Thyroid gland (tissue), 4 donors: ENCODE measurements at regions of chr6 and their contacts with region 1.

Region 1: GRCh38 chr6:90296346-90297114 is at the start of gene BACH2:
- DNase-seq: peak; percentile 94 to 95
- H3K4me3 ChIP-seq: peak within 1 kb of the TSS; percentile 10 to 87 (median 76)
- H3K27ac ChIP-seq: peak within 1 kb of the TSS; percentile 36 to 83 (median 71)
- H3K4me1 ChIP-seq: peaks cover 7% of the 10 kb centered on the region in 2 donors
- H3K27me3 ChIP-seq: no peaks in the 10 kb centered on the region
- CTCF ChIP-seq: peak in 1 of 6 experiments; percentile 38
- POLR2A ChIP-seq: peak in 1 of 2 donors; percentile 87
- total RNA-seq, gene BACH2: 0.98 to 6.6 (median 3.9) TPM

Region 2: DNA sequence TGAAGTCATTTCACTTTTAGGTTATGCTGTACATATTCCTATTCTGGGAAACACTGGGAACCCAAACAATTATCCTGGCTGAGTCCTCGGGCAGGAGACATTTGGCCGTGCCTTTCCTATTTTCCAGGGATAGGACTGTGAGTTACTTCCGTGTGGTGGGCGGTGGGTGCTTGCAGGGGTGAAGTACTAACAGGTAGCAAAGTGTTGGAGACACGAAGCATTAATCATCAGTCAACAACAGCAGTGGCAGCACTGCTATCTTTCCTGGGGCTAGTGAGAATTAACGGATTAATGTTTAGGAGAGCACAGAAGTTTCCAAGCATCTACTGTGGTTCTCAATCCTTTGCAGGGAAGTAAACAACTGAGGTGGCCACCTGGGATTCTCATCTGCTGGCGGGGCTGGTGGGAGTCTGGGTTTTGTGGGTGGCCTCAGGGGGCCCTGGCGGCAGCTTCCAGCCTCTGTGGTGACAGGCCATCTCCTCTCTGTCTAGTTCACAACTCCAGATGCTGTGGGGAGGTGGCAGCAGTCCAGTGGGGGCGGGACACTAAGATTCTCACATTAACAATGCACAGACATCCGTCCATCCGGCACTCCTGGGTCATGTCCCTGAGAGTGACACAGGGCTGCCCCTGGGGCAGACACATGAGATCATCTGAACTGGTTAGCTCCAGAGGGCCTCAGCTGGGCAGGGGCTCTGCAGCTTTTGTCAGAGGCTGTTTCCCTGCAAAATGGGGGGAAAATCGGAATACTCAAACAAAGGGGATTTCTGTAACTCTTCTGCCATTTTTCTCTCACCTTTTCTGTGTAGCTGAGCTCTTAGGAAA is 311.4 kb before region 1 on chr6:
- intact Hi-C with region 1: loop called (anchors 10 kb)
- DNase-seq: no peak
- H3K4me3 ChIP-seq: no peak overlapping the region
- H3K27ac ChIP-seq: no peak overlapping the region
- H3K4me1 ChIP-seq: peaks cover 9 to 14% of the 10 kb centered on the region in 2 donors
- H3K27me3 ChIP-seq: no peaks in the 10 kb centered on the region
- CTCF ChIP-seq: no peak
- POLR2A ChIP-seq: no peak

Region 3: GRCh38 chr6:90098001-90098531 is 198.5 kb before region 1 on chr6:
- intact Hi-C with region 1: loop called (anchors 10 kb)
- DNase-seq: peak; percentile 10 to 28
- H3K4me3 ChIP-seq: no peak overlapping the region
- H3K27ac ChIP-seq: peak overlapping the region in 2 of 3 donors; percentile 48 to 65
- H3K4me1 ChIP-seq: peaks cover 0 to 4% of the 10 kb centered on the region in 2 donors
- H3K27me3 ChIP-seq: no peaks in the 10 kb centered on the region
- CTCF ChIP-seq: peak in 2 of 6 experiments; percentile 11
- POLR2A ChIP-seq: no peak

Region 4: DNA sequence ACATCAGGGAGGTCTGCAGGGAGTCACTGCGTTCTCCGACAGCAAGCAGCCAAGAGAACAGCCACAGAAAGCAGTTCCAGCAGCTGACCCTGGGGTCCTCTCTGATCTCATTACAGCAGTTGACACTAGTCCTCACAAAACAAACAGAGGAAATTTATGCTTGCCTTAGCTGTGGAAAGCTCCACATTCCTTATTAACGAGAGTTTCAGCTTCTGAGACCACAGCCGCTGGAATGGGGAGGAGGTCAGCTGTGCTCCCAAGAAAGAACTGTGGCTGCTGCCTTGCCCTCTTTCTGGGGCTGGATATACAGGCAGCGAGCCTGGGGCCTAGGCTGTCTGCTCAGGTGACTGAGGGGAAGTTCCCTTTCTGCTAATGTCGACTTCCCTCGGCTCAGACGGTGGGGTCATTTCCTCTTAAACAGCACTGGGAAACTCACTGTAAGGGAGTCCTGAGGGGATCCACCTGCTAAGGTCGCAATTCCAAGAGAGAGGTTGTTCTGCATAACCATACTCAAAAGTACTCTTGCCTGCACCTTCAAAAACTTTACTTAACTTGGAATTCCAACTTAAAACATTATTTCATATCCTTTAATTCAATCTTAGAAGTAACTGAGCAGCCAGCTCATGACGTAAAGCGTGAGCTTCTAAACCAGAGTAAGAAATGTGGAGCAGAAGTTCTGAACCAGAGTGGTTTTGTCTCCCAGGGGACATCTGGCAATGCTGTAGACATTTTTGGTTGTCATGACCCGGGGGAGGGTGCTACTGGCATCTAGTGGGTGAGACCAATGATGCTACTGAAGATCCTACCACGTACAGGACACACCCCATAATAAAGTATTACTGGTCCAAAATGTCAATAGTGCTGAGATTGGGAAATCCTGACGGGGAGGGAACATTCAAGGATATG is 80.2 kb before region 1 on chr6:
- intact Hi-C with region 1: loop called (anchors 10 kb)
- DNase-seq: peak; percentile 6 to 26
- H3K4me3 ChIP-seq: no peak overlapping the region
- H3K27ac ChIP-seq: peak overlapping the region in 2 of 3 donors; percentile 50 to 54
- H3K4me1 ChIP-seq: peaks cover 21 to 34% of the 10 kb centered on the region in 2 donors
- H3K27me3 ChIP-seq: no peaks in the 10 kb centered on the region
- CTCF ChIP-seq: no peak
- POLR2A ChIP-seq: no peak

Region 5: DNA sequence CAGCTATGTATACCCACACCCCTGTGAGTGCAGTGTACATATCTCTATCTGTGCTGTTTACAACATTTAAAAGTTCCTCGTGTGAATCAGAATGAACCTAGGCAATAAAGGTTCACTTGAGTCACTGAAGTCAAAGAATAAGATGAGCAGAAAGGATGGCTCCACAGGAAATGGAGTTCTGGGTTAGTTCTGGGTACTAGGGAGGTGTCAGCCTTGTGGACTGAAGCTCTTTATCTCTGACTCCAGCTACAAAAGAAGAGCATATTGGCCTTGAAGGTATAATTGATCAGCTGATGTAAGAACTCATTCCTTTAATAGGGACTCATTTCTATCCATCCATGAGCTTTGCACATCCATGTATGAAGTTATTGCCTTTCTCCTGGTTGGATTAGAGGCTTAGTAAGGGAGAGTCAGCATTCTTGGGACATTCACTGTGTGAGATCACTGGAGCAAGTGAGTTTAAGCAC is 74.0 kb after region 1 on chr6:
- intact Hi-C with region 1: loop called (anchors 5 kb)
- DNase-seq: no peak
- H3K4me3 ChIP-seq: no peak overlapping the region
- H3K27ac ChIP-seq: peak overlapping the region in 1 of 3 donors; percentile 96
- H3K4me1 ChIP-seq: peaks cover 22 to 23% of the 10 kb centered on the region in 2 donors
- H3K27me3 ChIP-seq: no peaks in the 10 kb centered on the region
- CTCF ChIP-seq: no peak
- POLR2A ChIP-seq: no peak

Region 6: GRCh38 chr6:90393232-90393884 is 96.8 kb after region 1 on chr6:
- intact Hi-C with region 1: loop called (anchors 5 kb)
- DNase-seq: peak; percentile 53 to 63
- H3K4me3 ChIP-seq: no peak overlapping the region
- H3K27ac ChIP-seq: no peak overlapping the region
- H3K4me1 ChIP-seq: no peaks in the 10 kb centered on the region
- H3K27me3 ChIP-seq: no peaks in the 10 kb centered on the region
- CTCF ChIP-seq: peak; percentile 31 to 82 (median 72)
- POLR2A ChIP-seq: no peak

Region 7: DNA sequence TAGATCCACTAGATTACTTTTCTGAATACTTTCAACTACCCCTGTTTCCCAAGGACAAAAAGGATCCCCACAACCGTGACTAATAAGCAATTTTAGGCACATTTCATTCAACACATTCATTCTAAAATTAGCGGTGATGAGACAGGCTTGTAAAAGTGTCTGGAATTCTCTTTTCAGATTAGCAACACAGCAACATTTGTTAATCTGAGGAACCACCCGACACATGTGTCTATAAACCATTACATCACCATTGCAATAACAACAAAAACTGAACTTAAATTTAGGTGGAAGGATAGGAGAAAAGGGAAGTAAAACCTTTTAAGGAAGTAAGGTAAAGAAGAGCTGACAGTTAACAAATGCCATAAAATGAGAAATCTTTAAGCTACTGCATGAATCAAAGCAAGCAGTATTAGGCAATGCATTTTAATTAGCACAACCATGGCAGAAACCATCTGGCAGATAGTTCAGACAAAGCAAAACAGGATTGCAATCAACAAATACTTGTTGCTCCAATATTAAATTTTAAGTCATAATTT is 241.3 kb after region 1 on chr6:
- intact Hi-C with region 1: no loop called
- DNase-seq: no peak
- H3K4me3 ChIP-seq: no peak overlapping the region
- H3K27ac ChIP-seq: no peak overlapping the region
- H3K4me1 ChIP-seq: peaks cover 0 to 4% of the 10 kb centered on the region in 2 donors
- H3K27me3 ChIP-seq: no peaks in the 10 kb centered on the region
- CTCF ChIP-seq: no peak
- POLR2A ChIP-seq: no peak